PC-3 (cell line): ENCODE measurements at regions of chr7 and their contacts with region 1.

Region 1: DNA sequence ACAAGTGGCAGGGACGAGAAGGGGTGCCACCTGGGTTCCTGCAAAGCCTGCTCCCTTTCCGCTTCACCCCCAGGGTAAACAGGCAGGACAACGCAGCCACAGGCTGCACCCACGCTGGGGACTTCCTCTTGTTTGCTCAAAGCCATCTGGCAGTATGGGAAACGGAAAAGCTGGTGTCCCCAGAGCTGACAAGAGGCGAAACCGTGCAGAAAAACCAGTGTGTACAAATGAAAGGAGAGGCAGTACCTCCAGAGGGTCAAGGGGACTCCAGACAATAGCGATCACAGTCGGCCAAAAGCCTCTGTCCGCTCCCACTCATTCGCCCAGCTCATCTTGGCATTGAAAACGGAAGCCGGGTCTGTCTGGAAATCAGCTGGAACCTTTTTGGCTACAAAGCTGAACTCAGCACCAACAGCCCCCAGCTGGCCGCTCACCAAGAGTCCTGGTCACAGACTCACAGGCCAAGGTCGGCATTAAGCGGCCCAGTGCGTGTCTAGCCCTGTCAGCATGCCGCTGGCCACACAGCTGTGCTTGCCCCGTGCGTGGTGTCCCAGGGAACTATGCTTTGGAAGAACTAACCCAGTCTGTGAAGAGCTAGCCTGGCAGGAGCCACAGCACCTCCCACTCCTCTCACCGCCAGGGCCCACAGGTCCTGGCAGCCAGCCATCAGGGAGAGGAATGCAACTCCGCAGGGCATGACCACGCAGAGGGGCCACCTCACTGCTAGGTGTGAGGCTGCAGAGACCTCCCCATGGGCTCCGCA is 10.4 kb downstream of the TNS3 start:
- DNase-seq: peak; percentile 84
- ATAC-seq: peak; percentile 50
- H3K4me3 ChIP-seq: peak overlapping the region; percentile 40
- H3K27ac ChIP-seq: peak overlapping the region; percentile 95
- H3K4me1 ChIP-seq: peaks cover 62% of the 10 kb centered on the region
- H3K27me3 ChIP-seq: no peaks in the 10 kb centered on the region
- CTCF ChIP-seq: no peak

Region 2: GRCh38 chr7:47534322-47535034 is 37.0 kb before region 1 on chr7:
- CTCF ChIA-PET with region 1: interaction called, 4 read pairs
- POLR2A ChIA-PET with region 1: no interaction called
- intact Hi-C with region 1: loop called (anchors 1 kb)
- DNase-seq: peak; percentile 96
- ATAC-seq: peak; percentile 73
- H3K4me3 ChIP-seq: peak overlapping the region; percentile 25; the same call in 1 of the 2 replicates
- H3K27ac ChIP-seq: peak overlapping the region; percentile 61
- H3K4me1 ChIP-seq: peaks cover 63% of the 10 kb centered on the region
- H3K27me3 ChIP-seq: no peaks in the 10 kb centered on the region
- CTCF ChIP-seq: peak; percentile 39

Region 3: GRCh38 chr7:47724335-47724982 is 152.9 kb after region 1 on chr7:
- CTCF ChIA-PET with region 1: no interaction called
- POLR2A ChIA-PET with region 1: interaction called, 11 read pairs
- intact Hi-C with region 1: no loop called
- DNase-seq: peak; percentile 66
- ATAC-seq: peak; percentile 80
- H3K4me3 ChIP-seq: no peak overlapping the region
- H3K27ac ChIP-seq: peak overlapping the region; percentile 65
- H3K4me1 ChIP-seq: peaks cover 21% of the 10 kb centered on the region
- H3K27me3 ChIP-seq: no peaks in the 10 kb centered on the region
- CTCF ChIP-seq: no peak